Stomach (tissue), 19 donors: ENCODE measurements at regions of chr6 and their contacts with region 1.

Region 1: DNA sequence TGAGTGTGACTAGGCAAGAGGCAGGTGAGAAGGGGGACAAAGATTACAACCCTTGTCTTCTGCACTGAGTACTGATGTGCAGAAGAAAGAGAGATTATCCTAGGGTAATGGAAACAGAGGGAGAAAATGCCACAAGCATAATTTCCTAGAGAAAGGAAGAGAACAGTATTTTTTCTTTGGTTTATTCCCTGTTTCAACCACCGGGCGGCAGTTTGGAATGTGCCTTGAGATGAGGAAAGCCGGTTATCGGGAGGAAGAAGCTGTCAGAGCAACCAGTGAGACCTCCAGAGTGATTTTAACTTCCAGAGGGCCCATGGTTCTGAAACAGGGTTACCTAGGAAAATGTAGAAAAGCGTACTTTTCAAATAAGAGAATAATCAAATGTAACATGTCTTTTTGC is 121.4 kb downstream of the REV3L start:
- DNase-seq: peak in 1 of 2 donors; percentile 67
- H3K4me3 ChIP-seq: no peak overlapping the region
- H3K27ac ChIP-seq: no peak overlapping the region
- H3K4me1 ChIP-seq: peaks cover 0 to 25% (median 10%) of the 10 kb centered on the region in 4 donors
- H3K27me3 ChIP-seq: no peaks in the 10 kb centered on the region
- CTCF ChIP-seq: peak in 3 of 7 experiments; percentile 12 to 48 (median 31)
- EP300 ChIP-seq: no peak
- POLR2A ChIP-seq: no peak

Region 2: GRCh38 chr6:111642463-111643158 is 281.0 kb after region 1 on chr6:
- intact Hi-C with region 1: loop called (anchors 10 kb)
- DNase-seq: peak; percentile 64 to 81
- H3K4me3 ChIP-seq: no peak overlapping the region
- H3K27ac ChIP-seq: no peak overlapping the region
- H3K4me1 ChIP-seq: peaks cover 0 to 10% (median 6%) of the 10 kb centered on the region in 4 donors
- H3K27me3 ChIP-seq: no peaks in the 10 kb centered on the region
- CTCF ChIP-seq: peak in 5 of 7 experiments; percentile 26 to 71 (median 51)
- EP300 ChIP-seq: no peak
- POLR2A ChIP-seq: no peak